Brain microvascular endothelial cell (primary cell): ENCODE measurements at regions of chr19 and their contacts with region 1.

Region 1: DNA sequence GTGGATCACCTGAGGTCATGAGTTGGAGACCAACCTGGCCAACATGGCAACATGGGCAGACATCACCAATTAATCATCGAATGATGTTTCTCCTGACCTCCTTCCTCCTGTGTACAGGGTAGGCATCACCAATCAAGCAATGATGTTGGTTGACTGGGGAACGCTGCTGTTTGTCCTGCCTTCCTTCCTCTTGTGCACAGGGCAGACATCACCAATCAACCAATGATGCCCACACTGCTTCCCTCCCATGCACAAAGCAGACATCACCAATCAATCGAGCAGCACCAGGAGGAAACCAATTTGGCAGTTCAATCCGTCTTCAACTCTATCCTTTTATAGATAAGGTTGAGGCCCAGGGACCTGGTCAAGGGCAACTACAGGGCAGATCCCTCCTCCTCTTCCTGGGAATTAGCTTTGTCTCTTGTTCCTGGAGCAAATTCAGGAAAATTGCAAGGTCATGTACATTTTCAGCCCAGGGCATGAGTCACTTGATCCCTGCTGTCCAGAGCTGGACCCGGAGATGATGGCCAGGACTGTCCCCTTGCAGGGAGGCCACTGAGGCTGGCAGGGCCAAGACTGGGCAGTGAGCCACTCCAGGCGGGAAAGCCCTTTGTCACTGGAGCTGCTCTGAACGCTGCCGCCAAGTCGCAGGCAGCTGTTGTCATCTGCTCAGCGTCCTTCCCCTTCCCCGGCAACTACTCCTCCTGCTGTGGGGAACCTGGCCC is 5.3 kb upstream of the CSNK1G2 start:
- DNase-seq: no peak
- H3K4me3 ChIP-seq: no peak overlapping the region
- H3K27ac ChIP-seq: no peak overlapping the region
- H3K27me3 ChIP-seq: no peaks in the 10 kb centered on the region
- CTCF ChIP-seq: no peak

Region 2: GRCh38 chr19:1875646-1876495 is 59.8 kb before region 1 on chr19:
- in situ Hi-C with region 1: no loop called
- DNase-seq: peak; percentile 74
- H3K4me3 ChIP-seq: peak overlapping the region; percentile 97
- H3K27ac ChIP-seq: peak overlapping the region; percentile 80
- H3K27me3 ChIP-seq: no peaks in the 10 kb centered on the region
- CTCF ChIP-seq: no peak

Region 3: GRCh38 chr19:1992759-1993260 is 57.2 kb after region 1 on chr19:
- in situ Hi-C with region 1: loop called (anchors 5 kb)
- DNase-seq: no peak
- H3K4me3 ChIP-seq: no peak overlapping the region
- H3K27ac ChIP-seq: no peak overlapping the region
- H3K27me3 ChIP-seq: no peaks in the 10 kb centered on the region
- CTCF ChIP-seq: no peak

Region 4: DNA sequence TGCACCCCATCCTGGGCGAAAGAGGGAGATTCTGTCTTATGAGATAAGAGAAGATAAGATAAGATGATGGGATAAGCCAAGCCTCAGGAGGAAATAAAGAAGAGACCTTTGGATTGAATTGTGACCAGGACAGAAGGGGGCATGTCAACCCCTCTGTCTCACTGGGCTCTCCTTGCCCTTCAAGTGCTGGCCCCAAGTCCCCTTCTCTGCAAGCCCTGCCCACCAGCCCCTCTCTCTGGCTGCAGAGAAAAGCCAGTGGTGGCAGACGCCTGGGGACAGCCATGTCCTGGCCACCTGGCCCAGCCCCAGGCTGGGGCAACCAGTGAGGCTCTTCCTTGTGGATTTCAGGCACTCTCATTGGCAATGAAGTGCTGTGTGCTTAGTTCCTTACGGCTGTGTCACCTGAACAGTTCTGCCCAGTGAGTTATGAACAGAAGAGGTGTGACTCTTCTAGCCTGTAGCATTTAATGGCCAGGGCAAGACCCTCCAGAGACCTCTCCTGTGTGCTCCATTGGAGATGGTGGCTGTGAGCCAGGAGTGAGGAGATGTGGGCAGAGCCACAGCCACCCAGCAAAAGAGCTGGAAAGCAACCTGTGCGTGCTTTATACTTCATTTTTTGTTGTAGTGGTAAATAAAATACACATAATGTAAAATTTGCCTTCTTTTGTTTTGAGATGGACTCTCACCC is 86.0 kb after region 1 on chr19:
- in situ Hi-C with region 1: no loop called
- DNase-seq: no peak
- H3K4me3 ChIP-seq: no peak overlapping the region
- H3K27ac ChIP-seq: no peak overlapping the region
- H3K27me3 ChIP-seq: no peaks in the 10 kb centered on the region
- CTCF ChIP-seq: no peak